Cardiac septum (tissue), 1 donor: ENCODE measurements at regions of chr2 and their contacts with region 1.

Region 1: GRCh38 chr2:221554769-221555493 is 17.2 kb downstream of the EPHA4 start:
- DNase-seq: no peak

Region 2: DNA sequence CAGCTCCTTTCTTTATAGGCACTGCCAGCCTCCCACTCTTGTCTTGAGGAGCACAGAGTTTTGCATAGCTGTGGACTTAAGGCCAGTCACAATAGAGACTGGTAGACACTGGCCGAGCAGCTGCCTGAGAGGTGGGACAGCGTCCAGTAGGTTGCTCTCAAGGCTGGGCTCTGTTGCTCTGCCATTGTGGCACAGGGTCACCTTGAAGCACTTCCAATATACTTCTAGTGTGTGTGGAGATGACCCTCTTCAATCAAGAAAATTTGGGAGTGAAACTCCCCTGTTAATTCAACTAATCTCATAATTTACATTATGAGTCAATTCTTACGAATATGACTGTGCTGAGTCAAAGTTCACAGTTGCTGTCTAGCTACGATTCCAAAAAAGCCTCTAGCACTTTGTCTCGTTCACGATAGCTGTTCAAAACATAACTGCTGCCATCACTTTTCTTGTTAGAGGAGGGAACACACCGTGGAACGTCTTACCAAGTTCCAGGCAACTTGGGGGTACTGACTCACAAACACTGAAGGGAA is 619.1 kb before region 1 on chr2:
- intact Hi-C with region 1: no loop called
- DNase-seq: no peak

Region 3: DNA sequence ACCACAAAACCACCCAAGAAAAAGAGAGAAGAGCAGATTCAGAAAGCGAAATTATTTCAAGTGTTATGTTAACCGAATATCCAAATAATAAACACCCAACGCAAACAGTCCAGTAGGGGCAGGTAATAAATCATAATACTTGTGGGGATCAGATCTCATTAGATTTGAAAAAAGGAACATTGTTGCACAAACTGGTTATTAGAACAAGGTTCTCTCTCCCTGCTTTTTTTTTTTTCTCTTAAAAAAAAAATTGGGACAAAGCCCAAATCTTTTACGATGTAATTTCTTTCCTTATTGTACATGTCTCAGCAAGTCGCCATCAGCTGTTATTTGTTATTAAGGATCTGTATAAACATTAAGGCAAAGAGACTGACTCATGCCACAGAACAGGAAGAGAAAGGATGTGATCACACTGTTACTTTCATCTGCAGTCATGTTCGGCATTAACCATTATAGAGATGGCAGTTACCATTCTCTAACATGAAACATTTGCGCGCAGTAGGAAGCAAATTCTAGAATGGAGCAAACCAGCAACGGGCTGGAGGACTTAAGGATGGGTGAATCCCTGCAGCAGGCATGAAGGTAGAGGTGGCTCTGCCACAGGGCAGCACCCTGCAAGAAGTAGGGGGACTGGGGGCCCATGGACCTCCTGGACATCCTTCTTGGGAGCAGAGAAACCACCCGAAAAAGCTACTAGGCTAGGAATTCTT is 24.8 kb before region 1 on chr2:
- intact Hi-C with region 1: loop called (anchors 1 kb)
- DNase-seq: no peak